ENCODE measurements at regions of chr4 and their contacts with region 1.

Region 1: DNA sequence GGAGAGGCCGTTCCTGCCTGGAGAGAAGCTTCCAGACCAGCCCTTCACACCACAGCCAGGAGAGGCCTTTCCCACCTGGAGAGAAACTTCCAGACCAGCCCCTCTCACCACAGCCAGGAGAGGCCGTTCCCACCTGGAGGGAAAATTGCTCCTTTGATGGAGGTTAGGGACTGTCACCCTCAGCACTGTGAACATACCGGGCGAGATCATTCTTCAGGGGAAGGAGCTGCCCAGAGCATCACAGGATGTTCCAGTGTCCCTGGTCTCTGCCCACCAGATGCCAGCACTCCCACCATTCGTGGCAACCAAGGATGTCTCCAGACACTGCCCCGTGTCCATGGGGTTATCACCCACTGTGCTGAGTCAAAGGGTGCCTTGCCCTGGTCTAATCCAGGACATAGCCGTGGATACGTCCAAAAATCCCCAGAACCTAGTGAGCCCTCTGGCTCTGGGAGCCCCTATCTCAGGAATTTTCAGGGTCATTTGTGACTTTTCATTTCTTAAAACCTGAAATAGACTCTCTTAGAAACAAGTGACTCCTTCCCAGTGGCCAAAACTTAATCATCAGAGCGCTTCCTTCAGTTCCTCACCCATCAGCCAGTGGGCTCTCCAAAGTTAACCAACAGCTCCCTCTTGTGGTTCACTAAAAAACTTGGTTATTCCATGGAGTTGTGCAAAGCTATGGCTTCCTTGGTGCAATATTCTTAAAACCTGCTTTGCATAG is 80.2 kb downstream of the CRMP1 start:
- DNase-seq: peak; percentile 58
- H3K4me3 ChIP-seq: no peak overlapping the region; a peak in 1 of 4 replicates
- H3K27ac ChIP-seq: no peak overlapping the region
- H3K4me1 ChIP-seq: peaks cover 0 to 10% of the 10 kb centered on the region in 2 experiments; a peak in 1 of 4 replicates
- H3K27me3 ChIP-seq: no peaks in the 10 kb centered on the region
- CTCF ChIP-seq: peak; percentile 80
- EP300 ChIP-seq: no peak
- RAD21 ChIP-seq: peak; percentile 76

Region 2: DNA sequence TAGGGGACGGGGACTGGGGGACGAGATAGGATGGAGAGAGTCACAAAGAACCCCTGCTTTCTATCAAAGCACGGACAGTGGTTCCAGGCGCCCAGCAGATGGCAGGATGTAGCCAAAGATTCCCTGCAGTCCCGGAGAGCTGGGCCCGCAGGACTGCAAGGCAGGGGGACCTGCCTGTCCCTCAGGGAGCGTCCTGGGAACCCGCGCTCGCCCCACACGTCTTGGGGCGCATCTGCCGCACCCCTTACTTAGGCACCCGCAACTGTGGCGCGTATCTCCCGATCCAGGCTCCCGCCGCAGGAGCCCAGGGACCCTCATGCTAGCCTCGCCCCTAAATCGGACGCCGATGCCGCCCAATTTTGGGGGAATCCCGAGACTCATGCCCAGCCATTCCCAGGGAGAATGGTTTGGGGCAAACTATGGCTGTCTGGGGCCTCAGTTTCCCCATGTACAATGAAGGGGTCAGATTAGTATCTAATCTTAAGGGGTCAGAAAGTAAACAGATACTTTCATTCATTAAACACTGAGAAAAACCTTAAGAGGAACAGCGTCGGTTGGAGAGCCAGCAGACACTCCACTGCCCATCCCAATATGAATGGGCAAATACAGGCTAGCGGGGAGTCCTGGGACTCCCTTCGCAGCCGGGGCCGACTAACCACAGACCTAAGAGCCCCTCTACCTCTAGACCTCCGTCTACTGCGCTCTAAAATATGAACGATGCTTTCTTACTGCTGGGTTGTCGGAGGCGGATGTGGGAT is 762.0 kb before region 1 on chr4:
- CTCF ChIA-PET with region 1: interaction called, 14 read pairs
- POLR2A ChIA-PET with region 1: no interaction called
- DNase-seq: peak; percentile 88
- H3K4me3 ChIP-seq: peak overlapping the region; percentile 38 to 68
- H3K27ac ChIP-seq: no peak overlapping the region
- H3K4me1 ChIP-seq: peaks cover 0 to 12% of the 10 kb centered on the region in 2 experiments; a peak in 1 of 4 replicates
- H3K27me3 ChIP-seq: peaks cover 15% of the 10 kb centered on the region
- CTCF ChIP-seq: peak; percentile 72
- EP300 ChIP-seq: no peak
- RAD21 ChIP-seq: peak; percentile 79

Region 3: DNA sequence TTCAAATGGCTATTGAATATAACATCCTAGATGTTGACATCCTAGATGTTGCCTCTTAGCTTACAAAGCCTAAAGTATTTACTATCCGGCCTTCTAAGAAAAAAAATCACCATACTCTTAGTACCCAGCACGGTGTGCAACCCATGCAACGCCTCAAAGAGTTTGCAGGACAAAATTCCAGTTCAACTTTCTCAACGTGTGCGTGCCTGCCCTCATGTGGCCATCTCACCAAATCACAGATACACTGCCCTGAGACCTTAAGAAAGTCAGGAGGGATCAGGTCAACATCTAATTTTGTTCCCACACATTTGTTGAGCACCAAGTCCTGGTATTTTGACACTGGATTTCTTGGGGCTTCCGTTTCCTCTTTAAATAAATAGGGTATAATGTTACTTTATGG is 12.0 kb after region 1 on chr4:
- CTCF ChIA-PET with region 1: interaction called, 32 read pairs
- POLR2A ChIA-PET with region 1: no interaction called
- DNase-seq: peak; percentile 57
- H3K4me3 ChIP-seq: no peak overlapping the region
- H3K27ac ChIP-seq: no peak overlapping the region
- H3K4me1 ChIP-seq: no peaks in the 10 kb centered on the region; a peak in 1 of 4 replicates
- H3K27me3 ChIP-seq: no peaks in the 10 kb centered on the region
- CTCF ChIP-seq: peak; percentile 58
- EP300 ChIP-seq: no peak
- RAD21 ChIP-seq: peak; percentile 46

Region 4: GRCh38 chr4:5979976-5980375 is 167.3 kb after region 1 on chr4:
- CTCF ChIA-PET with region 1: interaction called, 11 read pairs
- POLR2A ChIA-PET with region 1: interaction called, 3 read pairs
- DNase-seq: peak; percentile 80
- H3K4me3 ChIP-seq: no peak overlapping the region
- H3K27ac ChIP-seq: no peak overlapping the region
- H3K4me1 ChIP-seq: no peaks in the 10 kb centered on the region; a peak in 1 of 4 replicates
- H3K27me3 ChIP-seq: no peaks in the 10 kb centered on the region
- CTCF ChIP-seq: no peak
- EP300 ChIP-seq: no peak
- RAD21 ChIP-seq: peak; percentile 71